ENCODE measurements at regions of chr3 and their contacts with region 1.

Region 1: DNA sequence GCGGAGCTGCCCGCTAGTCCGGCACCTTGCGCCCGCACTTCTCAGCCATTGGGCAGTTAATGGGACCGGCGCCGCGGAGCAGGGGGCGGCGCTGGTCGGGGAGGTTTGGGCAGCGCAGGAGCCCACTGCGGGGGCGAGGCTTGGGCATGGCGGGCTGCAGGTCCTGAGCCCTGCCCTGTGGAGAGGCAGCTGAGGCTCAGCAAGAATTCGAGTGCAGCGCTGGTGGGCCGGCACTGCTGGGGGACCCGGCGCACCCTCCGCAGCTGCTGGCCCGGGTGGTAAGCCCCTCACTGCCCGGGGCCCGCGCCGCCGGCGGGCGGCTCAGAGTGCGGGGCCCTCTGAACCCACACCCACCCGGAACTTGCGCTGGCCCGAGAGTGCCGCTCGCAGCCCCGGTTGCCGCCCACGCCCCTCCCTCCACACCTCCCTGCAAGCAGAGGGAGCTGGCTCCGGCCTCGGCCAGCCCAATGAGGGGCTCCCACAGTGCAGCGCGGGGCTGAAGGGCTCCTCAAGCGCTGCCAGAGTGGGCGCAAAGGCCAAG is 835.0 kb downstream of the TBL1XR1 start:
- DNase-seq: no peak
- H3K4me3 ChIP-seq: no peak overlapping the region
- H3K27ac ChIP-seq: no peak overlapping the region
- H3K4me1 ChIP-seq: no peaks in the 10 kb centered on the region
- H3K27me3 ChIP-seq: peaks cover 2% of the 10 kb centered on the region
- CTCF ChIP-seq: no peak

Region 2: GRCh38 chr3:175422744-175423143 is 939.5 kb before region 1 on chr3:
- CTCF ChIA-PET with region 1: interaction called, 10 read pairs
- dilution Hi-C with region 1: no loop called
- in situ Hi-C with region 1: no loop called
- intact Hi-C with region 1: no loop called
- DNase-seq: no peak
- H3K4me3 ChIP-seq: no peak overlapping the region
- H3K27ac ChIP-seq: no peak overlapping the region
- H3K4me1 ChIP-seq: no peaks in the 10 kb centered on the region
- H3K27me3 ChIP-seq: no peaks in the 10 kb centered on the region
- CTCF ChIP-seq: peak in 1 of 2 donors; percentile 14

Region 3: GRCh38 chr3:176097027-176097426 is 265.2 kb before region 1 on chr3:
- CTCF ChIA-PET with region 1: no interaction called
- dilution Hi-C with region 1: no loop called
- in situ Hi-C with region 1: no loop called
- intact Hi-C with region 1: no loop called
- DNase-seq: no peak
- H3K4me3 ChIP-seq: no peak overlapping the region
- H3K27ac ChIP-seq: no peak overlapping the region
- H3K4me1 ChIP-seq: no peaks in the 10 kb centered on the region
- H3K27me3 ChIP-seq: no peaks in the 10 kb centered on the region
- CTCF ChIP-seq: no peak

Region 4: GRCh38 chr3:176172430-176172954 is 189.8 kb before region 1 on chr3:
- CTCF ChIA-PET with region 1: no interaction called
- dilution Hi-C with region 1: no loop called
- in situ Hi-C with region 1: no loop called
- intact Hi-C with region 1: no loop called
- DNase-seq: no peak
- H3K4me3 ChIP-seq: no peak overlapping the region
- H3K27ac ChIP-seq: no peak overlapping the region
- H3K4me1 ChIP-seq: no peaks in the 10 kb centered on the region
- H3K27me3 ChIP-seq: no peaks in the 10 kb centered on the region
- CTCF ChIP-seq: no peak

Region 5: GRCh38 chr3:176293276-176293675 is 69.0 kb before region 1 on chr3:
- CTCF ChIA-PET with region 1: no interaction called
- dilution Hi-C with region 1: no loop called
- in situ Hi-C with region 1: no loop called
- intact Hi-C with region 1: no loop called
- DNase-seq: no peak
- H3K4me3 ChIP-seq: no peak overlapping the region
- H3K27ac ChIP-seq: no peak overlapping the region
- H3K4me1 ChIP-seq: no peaks in the 10 kb centered on the region
- H3K27me3 ChIP-seq: no peaks in the 10 kb centered on the region
- CTCF ChIP-seq: no peak